CD4-positive, alpha-beta T cell (primary cell): ENCODE measurements at regions of chr9 and their contacts with region 1.

Region 1: DNA sequence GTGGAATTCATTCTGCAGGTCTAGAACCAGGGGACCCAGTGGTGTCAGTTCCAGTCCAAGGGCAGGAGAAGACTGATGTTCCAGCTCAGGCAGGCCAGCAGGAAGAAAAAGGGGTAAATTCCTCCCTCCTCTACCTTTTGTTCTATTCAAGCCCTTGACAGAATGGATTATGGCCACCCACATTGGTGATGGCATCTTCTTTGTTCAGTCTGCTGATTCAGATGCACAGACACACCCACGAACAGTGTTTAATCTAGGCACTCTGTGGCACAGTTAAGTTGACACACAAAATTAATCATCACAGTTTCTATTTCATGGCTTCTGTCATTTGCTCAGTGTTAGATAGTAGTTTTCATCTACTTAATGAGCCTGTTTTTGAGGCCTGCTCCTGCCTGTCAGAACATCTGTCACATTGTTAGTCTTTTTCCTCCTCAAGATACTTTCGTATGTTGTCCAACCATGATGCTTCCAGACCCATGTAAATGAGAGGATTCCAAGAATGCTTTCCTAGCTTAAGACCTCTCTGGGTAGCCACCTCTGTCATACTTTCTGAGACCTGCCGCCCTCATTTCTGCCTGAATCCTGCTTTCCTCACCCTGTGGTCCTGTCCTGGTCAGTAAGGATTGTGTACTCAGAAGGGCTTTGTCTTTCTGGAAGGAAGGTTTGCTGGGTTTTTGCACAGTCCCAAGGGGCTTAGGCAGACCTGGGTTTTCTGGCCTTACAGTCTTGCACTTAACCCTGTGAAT is 72.5 kb downstream of the SPIN1 start:
- DNase-seq: no peak
- ATAC-seq: no peak
- H3K4me3 ChIP-seq: no peak overlapping the region
- H3K4me3 Mint-ChIP-seq: no peak overlapping the region
- H3K27ac ChIP-seq: no peak overlapping the region
- H3K27ac Mint-ChIP-seq: no peak overlapping the region
- H3K4me1 ChIP-seq: no peaks in the 10 kb centered on the region
- H3K4me1 Mint-ChIP-seq: no peaks in the 10 kb centered on the region
- H3K27me3 ChIP-seq: no peaks in the 10 kb centered on the region
- H3K27me3 Mint-ChIP-seq: no peaks in the 10 kb centered on the region
- CTCF ChIP-seq: no peak

Region 2: DNA sequence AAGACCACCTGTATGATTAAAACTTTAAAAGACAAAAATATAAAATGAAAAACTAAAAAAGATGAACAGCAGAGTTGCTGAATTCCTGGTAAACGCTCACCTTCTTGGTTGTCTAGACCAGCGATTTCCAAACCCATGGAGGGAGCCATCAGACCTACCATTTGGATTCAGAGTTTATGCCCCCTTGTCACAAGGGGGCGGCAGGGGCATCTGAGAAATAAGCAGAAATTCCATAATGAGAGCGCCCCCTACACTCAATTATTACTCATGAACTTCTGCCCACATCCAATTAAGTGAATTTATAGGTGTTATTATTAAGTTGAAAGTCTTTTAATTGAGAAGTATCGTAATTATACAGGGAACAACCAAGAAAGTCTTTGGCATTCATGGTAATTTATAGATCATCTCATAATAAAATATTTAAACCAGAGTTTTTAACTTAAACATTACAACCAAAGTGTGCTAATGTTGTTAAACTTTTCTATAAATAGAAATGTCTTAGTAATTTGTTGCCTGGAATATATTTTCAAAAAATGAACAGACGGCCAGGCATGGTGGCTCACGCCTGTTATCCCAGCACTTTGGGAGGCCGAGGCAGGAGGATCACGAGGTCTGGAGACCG is 287.3 kb before region 1 on chr9:
- CTCF ChIA-PET with region 1: no interaction called
- POLR2A ChIA-PET with region 1: no interaction called
- intact Hi-C with region 1: loop called in 1 of 2 experiments (anchors 10 kb)
- DNase-seq: peak; percentile 5 to 76 (median 44)
- ATAC-seq: peak; percentile 48
- H3K4me3 ChIP-seq: no peak overlapping the region
- H3K4me3 Mint-ChIP-seq: no peak overlapping the region
- H3K27ac ChIP-seq: no peak overlapping the region
- H3K27ac Mint-ChIP-seq: no peak overlapping the region
- H3K4me1 ChIP-seq: no peaks in the 10 kb centered on the region
- H3K4me1 Mint-ChIP-seq: peaks cover 1% of the 10 kb centered on the region
- H3K27me3 ChIP-seq: no peaks in the 10 kb centered on the region
- H3K27me3 Mint-ChIP-seq: peaks cover 3% of the 10 kb centered on the region
- CTCF ChIP-seq: peak; percentile 91

Region 3: DNA sequence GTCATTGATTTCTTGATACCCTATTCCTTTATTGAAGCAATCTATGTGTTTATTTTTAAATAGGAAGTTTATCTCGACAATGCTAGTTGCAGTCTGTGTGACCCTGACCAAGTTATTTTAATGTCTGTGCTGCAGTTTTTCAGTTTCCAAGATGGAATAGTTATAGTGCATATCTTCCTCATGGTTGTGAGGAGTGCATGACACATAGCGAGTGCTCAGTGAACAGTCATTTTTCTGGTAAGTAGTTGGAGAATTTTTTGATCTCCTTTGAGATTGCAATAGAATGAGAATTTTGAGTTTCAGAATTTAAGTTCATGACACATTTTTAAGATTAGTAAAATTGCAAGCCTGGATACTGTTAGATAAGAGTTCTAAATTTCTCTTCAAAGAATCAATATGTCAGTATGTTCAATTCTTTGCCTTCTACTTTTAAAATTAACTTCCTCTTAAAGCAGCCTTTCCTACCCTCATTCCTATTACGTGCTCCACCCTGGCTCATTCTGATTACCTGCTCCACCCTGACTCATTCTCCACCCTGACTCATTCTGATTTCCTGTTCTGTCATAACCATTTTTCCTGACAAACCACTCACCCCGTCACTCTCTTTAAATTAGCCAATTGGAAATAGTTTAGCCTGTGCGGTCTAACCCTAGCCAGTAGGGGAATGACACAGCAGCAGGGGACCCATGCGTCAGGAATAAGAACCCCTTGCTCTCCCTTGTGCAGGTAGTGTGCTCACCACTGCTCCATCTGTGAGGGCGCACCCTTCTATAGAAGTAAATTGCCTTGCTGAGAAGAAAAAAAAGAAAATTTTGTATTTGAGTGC is 41.8 kb before region 1 on chr9:
- CTCF ChIA-PET with region 1: no interaction called
- POLR2A ChIA-PET with region 1: no interaction called
- intact Hi-C with region 1: no loop called
- DNase-seq: no peak
- ATAC-seq: no peak
- H3K4me3 ChIP-seq: no peak overlapping the region
- H3K4me3 Mint-ChIP-seq: no peak overlapping the region
- H3K27ac ChIP-seq: no peak overlapping the region
- H3K27ac Mint-ChIP-seq: peak overlapping the region; percentile 49
- H3K4me1 ChIP-seq: no peaks in the 10 kb centered on the region
- H3K4me1 Mint-ChIP-seq: peaks cover 5% of the 10 kb centered on the region
- H3K27me3 ChIP-seq: no peaks in the 10 kb centered on the region
- H3K27me3 Mint-ChIP-seq: no peaks in the 10 kb centered on the region
- CTCF ChIP-seq: no peak